ENCODE measurements at regions of chr1 and their contacts with region 1.

Region 1: GRCh38 chr1:37650173-37650572 is 15.5 kb upstream of the RSPO1 start:
- DNase-seq: no peak
- ATAC-seq: no peak
- H3K4me3 Mint-ChIP-seq: no peak overlapping the region
- H3K27ac Mint-ChIP-seq: no peak overlapping the region
- H3K4me1 Mint-ChIP-seq: no peaks in the 10 kb centered on the region
- H3K27me3 Mint-ChIP-seq: peaks cover 5% of the 10 kb centered on the region
- CTCF ChIP-seq: no peak

Region 2: GRCh38 chr1:37667023-37667761 is 17.0 kb after region 1 on chr1:
- CTCF ChIA-PET with region 1: no interaction called
- POLR2A ChIA-PET with region 1: no interaction called
- intact Hi-C with region 1: loop called (anchors 2 kb)
- DNase-seq: no peak
- ATAC-seq: no peak
- H3K4me3 Mint-ChIP-seq: no peak overlapping the region
- H3K27ac Mint-ChIP-seq: no peak overlapping the region
- H3K4me1 Mint-ChIP-seq: no peaks in the 10 kb centered on the region
- H3K27me3 Mint-ChIP-seq: peaks cover 8% of the 10 kb centered on the region
- CTCF ChIP-seq: no peak

Measured in activated CD8-positive, alpha-beta T cell treated with anti-CD3 and anti-CD28 coated beads for 36 hours (primary cell).